Aorta (tissue), 5 donors: ENCODE measurements at regions of chr2 and their contacts with region 1.

Region 1: GRCh38 chr2:178237488-178238143 is 43.3 kb downstream of the OSBPL6 start:
- DNase-seq: no peak
- ATAC-seq: no peak
- H3K4me3 ChIP-seq: no peak overlapping the region
- H3K27ac ChIP-seq: no peak overlapping the region
- H3K4me1 ChIP-seq: no peaks in the 10 kb centered on the region
- H3K27me3 ChIP-seq: no peaks in the 10 kb centered on the region

Region 2: GRCh38 chr2:178205853-178206521 is 31.6 kb before region 1 on chr2:
- intact Hi-C with region 1: loop called in 1 of 2 experiments (anchors 2 kb)
- DNase-seq: no peak
- ATAC-seq: no peak
- H3K4me3 ChIP-seq: no peak overlapping the region
- H3K27ac ChIP-seq: no peak overlapping the region
- H3K4me1 ChIP-seq: no peaks in the 10 kb centered on the region
- H3K27me3 ChIP-seq: no peaks in the 10 kb centered on the region